Natural killer cell (primary cell): ENCODE measurements at regions of chr9 and their contacts with region 1.

Region 1: DNA sequence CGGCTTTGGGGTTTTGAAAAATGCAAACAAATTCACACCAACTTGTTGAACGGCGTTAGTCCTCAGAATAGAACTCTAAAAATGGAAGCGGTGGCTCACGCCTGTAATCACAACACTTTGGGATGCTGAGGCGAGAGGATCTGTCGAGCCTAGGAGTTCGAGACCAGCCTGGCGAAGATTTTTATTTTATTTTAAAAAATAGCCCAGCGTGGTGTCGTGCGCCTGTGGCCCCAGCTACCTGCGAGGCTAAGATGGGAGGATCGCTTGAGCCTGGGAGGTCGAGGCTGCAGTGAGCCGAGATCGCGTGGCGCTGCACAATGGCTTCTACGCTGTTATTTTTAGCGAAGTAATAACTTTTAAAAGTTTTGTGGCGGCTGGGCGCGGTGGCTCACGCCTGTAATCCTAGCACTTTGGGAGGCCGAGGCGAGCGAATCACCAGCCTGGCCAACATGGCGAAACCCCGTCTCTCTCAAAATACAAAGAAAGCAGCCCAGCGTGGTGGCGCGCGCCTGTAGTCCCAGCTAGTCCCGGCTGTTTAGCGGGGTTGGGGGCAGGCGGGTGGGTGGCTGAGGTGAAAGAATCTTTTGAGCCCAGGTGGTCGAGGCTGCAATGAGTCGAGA is 699 bp upstream of the PLIN2 start:
- DNase-seq: peak; percentile 37 to 60
- ATAC-seq: peak; percentile 20 to 29 (median 21)
- H3K4me3 ChIP-seq: peak overlapping the region; percentile 86
- H3K4me3 Mint-ChIP-seq: peak overlapping the region; percentile 92
- H3K27ac ChIP-seq: peak overlapping the region; percentile 71
- H3K27ac Mint-ChIP-seq: peak overlapping the region; percentile 86 to 93
- H3K4me1 ChIP-seq: peaks cover 36% of the 10 kb centered on the region
- H3K4me1 Mint-ChIP-seq: peaks cover 23 to 39% of the 10 kb centered on the region in 2 donors
- H3K27me3 ChIP-seq: no peaks in the 10 kb centered on the region
- H3K27me3 Mint-ChIP-seq: no peaks in the 10 kb centered on the region
- CTCF ChIP-seq: no peak

Region 2: DNA sequence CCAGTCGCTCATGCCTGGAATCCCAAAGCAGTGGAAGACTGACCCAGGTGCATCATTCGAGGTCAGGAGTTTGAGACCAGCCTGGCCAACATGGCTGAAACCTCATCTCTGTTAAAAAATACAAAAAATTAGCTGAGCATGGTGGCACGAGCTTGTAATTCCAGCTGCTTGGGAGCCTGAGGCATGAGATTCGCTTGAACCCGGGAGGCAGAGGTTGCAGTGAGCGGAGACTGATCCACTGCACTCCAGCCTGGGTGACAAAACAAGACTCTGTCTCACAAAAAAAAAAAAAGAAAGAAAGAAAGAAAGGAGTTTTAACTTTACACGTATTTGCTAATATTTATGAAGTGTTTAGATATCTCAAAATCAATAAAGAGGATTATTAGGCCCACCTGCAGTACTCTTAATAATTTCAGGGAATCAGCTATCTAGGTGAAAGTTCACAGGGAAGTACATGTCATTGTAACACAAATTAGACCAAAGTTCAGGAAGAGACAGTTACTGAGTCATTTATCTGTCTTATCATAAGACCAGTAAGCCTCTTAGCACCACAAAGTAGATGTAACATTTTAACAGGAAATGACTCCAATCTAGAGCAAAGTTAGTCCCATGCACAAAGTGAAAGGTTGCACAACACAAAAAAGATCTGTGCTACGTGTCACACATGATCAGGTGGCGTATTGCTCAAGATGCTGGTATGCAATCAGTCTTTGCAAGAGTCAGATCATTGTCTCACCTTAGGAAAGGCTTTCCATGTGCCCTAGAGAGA is 33.5 kb after region 1 on chr9:
- intact Hi-C with region 1: loop called (anchors 1 kb)
- DNase-seq: peak; percentile 50 to 75
- ATAC-seq: peak; percentile 92 to 97 (median 96)
- H3K4me3 ChIP-seq: no peak overlapping the region
- H3K4me3 Mint-ChIP-seq: peak overlapping the region; percentile 73
- H3K27ac ChIP-seq: peak overlapping the region; percentile 90
- H3K27ac Mint-ChIP-seq: peak overlapping the region; percentile 77 to 98
- H3K4me1 ChIP-seq: peaks cover 18% of the 10 kb centered on the region
- H3K4me1 Mint-ChIP-seq: peaks cover 23 to 24% of the 10 kb centered on the region in 2 donors
- H3K27me3 ChIP-seq: no peaks in the 10 kb centered on the region
- H3K27me3 Mint-ChIP-seq: no peaks in the 10 kb centered on the region
- CTCF ChIP-seq: no peak